Calu3 (cell line): ENCODE measurements at regions of chr17 and their contacts with region 1.

Region 1: DNA sequence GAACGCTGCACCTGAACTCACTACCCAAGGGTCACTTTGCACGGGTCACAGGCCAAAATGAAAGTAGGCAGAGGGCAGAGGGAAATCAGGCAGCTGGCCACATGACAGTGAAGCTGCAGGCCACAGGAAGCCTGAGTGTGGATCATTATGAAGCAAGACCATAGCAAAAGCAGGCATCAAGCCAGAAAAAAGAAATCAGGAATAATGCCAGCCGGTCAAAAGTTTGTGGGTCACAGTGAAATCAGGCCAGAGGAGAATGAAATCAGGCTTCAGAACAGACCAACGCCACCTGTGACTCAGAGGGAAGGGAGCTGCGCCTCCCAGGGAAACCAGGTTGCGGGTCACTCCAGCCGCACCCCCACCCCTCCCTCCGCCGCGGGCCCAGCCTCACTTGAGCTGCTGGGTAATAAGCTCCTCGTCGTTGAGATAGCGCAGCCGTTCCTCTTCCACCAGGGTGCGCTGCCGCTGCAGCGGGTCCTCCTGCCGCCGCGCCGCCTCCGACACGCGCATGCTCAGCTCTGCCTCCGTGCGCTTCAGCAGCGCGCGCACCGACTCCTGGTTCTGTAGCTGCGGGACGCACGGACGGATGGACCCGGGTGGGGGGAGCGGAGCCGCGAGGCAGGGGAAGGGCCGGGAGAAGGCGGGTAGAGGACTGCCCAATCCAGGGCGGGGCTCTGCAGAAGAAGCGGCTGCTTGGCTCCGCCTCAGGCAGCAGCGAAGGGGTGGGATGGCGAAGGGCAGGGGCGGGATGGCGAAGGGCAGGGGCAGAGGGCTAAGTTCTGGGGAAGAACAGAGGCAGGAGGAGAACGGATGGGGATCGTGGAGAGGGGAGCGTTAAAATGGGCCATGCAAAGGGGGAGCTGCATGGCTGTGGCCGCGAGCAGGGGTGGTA is 47.7 kb downstream of the SRCIN1 start:
- DNase-seq: peak; percentile 100
- H3K4me3 Mint-ChIP-seq: peak overlapping the region; percentile 78
- H3K27ac Mint-ChIP-seq: peak overlapping the region; percentile 52
- H3K4me1 Mint-ChIP-seq: peaks cover 43% of the 10 kb centered on the region
- H3K27me3 Mint-ChIP-seq: peaks cover 10% of the 10 kb centered on the region
- CTCF ChIP-seq: peak; percentile 100

Region 2: GRCh38 chr17:38533866-38534497 is 24.1 kb before region 1 on chr17:
- CTCF ChIA-PET with region 1: interaction called, 37 read pairs
- intact Hi-C with region 1: no loop called
- DNase-seq: no peak
- H3K4me3 Mint-ChIP-seq: no peak overlapping the region
- H3K27ac Mint-ChIP-seq: no peak overlapping the region
- H3K4me1 Mint-ChIP-seq: no peaks in the 10 kb centered on the region
- H3K27me3 Mint-ChIP-seq: peaks cover 82% of the 10 kb centered on the region
- CTCF ChIP-seq: no peak

Region 3: GRCh38 chr17:38584350-38584925 is 26.4 kb after region 1 on chr17:
- CTCF ChIA-PET with region 1: interaction called, 437 read pairs
- intact Hi-C with region 1: loop called (anchors 1 kb)
- DNase-seq: peak; percentile 99
- H3K4me3 Mint-ChIP-seq: peak overlapping the region; percentile 9
- H3K27ac Mint-ChIP-seq: peak overlapping the region; percentile 3
- H3K4me1 Mint-ChIP-seq: peaks cover 37% of the 10 kb centered on the region
- H3K27me3 Mint-ChIP-seq: peaks cover 71% of the 10 kb centered on the region
- CTCF ChIP-seq: peak; percentile 100

Region 4: DNA sequence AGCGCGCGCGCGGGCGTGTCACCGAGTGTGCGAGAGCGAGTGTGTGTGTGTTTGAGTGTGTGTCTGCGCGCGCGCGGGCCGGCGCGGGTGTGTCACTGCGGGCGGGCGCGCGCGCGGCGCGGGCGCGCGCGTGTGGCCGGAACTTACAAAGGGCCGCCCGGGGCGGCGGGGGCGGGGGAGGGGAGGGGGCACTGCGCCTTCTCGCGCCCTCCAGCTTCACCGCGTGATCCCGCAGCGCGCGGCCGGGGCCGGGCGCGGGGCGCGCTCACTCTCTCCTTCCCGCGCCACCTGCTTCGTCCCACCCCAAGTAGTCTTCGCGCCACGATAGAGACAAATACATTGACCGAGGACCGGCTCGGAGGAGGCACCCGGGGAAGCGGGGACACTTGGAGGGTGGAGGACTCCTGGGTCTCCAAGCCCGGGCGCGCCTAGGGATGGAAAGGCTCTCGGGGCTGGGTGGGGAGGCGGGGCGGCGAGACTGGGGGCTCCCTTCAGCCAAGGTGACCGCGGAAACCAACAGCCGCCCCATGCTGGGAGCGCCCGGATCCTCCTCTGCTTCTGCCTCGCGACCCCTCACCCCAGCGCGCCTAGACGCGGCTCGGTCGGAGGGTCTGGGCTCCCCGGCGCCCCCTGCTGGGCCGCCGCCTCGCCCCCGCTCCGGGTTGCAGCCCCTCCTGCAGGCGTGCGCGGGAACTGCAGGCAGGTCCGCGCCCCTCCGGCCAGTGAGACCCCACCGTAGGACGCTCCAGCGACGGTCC is 48.0 kb after region 1 on chr17 and contains the start of gene SRCIN1:
- CTCF ChIA-PET with region 1: interaction called, 103 read pairs
- intact Hi-C with region 1: no loop called
- DNase-seq: peak; percentile 91
- H3K4me3 Mint-ChIP-seq: peak within 1 kb of the TSS; percentile 74
- H3K27ac Mint-ChIP-seq: peak within 1 kb of the TSS; percentile 48
- H3K4me1 Mint-ChIP-seq: peaks cover 31% of the 10 kb centered on the region
- H3K27me3 Mint-ChIP-seq: peaks cover 99% of the 10 kb centered on the region
- CTCF ChIP-seq: peak; percentile 100
- total RNA-seq, gene SRCIN1: 46.6 and 46.7 TPM in 2 replicates

Region 5: DNA sequence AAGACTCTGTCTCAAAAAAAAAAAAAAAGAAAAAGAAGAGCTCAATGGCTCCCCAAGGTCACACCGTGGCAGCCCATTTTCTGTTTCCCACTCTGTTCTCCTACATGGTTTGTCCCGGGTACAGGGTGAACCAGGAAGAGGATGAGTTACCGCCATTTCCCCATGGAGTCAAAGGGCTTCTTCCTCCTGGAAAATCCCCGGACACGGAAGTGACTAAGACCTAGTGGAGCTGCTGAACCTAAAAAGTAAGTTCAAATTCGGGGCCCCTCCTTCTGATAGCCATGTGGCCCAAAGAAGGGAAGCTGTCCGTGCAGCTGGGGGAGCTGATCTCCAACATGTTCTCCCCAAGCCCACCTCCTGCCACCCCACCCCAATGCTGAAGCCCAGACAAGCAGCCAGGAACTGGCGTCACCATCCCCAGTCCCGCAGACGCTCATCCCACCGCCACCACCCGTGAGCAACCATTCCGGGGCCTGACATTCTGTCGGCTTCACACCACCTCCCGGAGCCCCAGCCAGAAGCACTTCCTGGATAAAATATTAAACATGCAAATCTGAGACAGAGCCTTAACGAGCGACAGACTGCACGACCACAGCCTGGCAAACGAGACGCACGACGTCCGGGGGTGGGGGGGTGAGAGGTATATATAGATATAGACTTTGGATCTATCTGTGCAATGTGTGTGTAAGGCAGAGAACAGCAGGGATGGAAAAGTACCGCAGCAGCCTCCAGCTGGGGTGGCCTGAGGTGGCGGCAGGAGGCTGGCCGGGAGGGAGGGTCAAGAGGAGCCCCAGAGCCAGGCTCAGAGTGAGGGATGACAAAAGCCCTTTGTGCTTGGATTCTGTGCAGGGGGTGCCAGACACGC is 99.1 kb after region 1 on chr17:
- CTCF ChIA-PET with region 1: interaction called, 496 read pairs
- intact Hi-C with region 1: no loop called
- DNase-seq: peak; percentile 88
- H3K4me3 Mint-ChIP-seq: peak overlapping the region; percentile 36
- H3K27ac Mint-ChIP-seq: peak overlapping the region; percentile 31
- H3K4me1 Mint-ChIP-seq: peaks cover 30% of the 10 kb centered on the region
- H3K27me3 Mint-ChIP-seq: peaks cover 49% of the 10 kb centered on the region
- CTCF ChIP-seq: no peak

Region 6: DNA sequence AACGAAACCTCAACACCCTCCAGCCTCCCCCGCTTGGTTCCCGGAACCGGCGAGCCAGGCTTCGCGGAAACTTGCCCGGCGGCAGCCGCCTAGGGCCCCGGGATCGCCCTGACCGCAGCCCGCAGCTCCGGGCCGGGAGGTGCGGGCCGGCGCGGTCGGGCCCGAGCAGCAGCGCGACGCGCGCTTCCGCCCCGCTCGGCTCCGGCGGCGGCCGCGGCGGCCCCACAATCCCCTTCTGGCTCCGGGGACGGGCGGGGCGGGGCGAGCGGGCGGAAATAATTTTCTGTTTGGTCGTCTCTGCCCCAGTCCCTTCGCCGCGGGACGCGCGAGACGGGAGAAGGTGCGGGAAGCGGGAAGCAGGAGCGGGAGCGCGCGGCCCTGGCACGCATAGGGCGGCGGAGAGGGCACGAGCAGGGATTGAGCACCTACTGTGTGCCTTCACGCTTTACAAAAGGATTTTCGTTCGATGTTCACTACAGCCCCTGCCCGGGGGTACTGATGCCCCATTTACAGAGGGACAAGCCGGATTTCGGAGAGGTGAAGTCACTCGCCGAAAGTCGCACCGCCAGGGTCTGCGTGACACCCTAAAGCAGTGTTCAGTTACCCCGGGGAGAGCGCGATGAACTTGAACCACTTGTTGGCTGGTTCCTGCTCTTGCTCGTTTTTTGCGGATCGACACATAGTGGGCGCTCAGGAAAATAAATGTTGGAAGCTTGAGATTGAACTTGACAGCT is 144.3 kb after region 1 on chr17:
- CTCF ChIA-PET with region 1: interaction called, 11 read pairs
- intact Hi-C with region 1: no loop called
- DNase-seq: peak; percentile 99
- H3K4me3 Mint-ChIP-seq: peak overlapping the region; percentile 85
- H3K27ac Mint-ChIP-seq: peak overlapping the region; percentile 90
- H3K4me1 Mint-ChIP-seq: peaks cover 37% of the 10 kb centered on the region
- H3K27me3 Mint-ChIP-seq: peaks cover 33% of the 10 kb centered on the region
- CTCF ChIP-seq: no peak

Region 7: DNA sequence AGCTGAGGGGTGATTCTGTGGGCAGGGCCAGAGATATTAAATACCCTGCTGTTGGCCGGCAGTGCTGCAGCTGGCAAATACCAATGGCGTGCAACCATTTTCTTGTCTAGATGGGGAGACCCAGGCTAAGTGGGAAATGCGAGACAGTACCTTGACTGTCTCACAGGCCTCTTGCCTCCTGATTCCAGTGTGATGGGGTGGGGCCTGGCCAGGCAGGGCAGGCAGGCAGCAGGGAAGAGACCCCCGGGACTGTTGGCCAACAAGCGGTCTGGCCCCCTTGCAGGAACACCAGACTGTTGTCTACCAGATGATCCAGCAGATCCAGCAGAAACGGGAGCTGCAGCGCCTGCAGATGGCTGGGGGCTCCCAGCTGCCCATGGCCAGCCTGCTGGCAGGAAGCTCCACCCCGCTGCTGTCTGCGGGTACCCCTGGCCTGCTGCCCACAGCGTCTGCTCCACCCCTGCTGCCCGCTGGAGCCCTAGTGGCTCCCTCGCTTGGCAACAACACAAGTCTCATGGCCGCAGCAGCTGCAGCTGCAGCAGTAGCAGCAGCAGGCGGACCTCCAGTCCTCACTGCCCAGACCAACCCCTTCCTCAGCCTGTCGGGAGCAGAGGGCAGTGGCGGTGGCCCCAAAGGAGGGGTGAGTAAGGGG is 166.4 kb after region 1 on chr17:
- CTCF ChIA-PET with region 1: no interaction called
- intact Hi-C with region 1: no loop called
- DNase-seq: no peak
- H3K4me3 Mint-ChIP-seq: no peak overlapping the region
- H3K27ac Mint-ChIP-seq: no peak overlapping the region
- H3K4me1 Mint-ChIP-seq: peaks cover 12% of the 10 kb centered on the region
- H3K27me3 Mint-ChIP-seq: no peaks in the 10 kb centered on the region
- CTCF ChIP-seq: no peak